ENCODE measurements at regions of chr1 and their contacts with region 1.

Region 1: GRCh38 chr1:5333291-5333690 is 658.9 kb downstream of the NPHP4 start:
- DNase-seq: no peak
- ATAC-seq: no peak
- H3K4me3 Mint-ChIP-seq: no peak overlapping the region
- H3K27ac Mint-ChIP-seq: no peak overlapping the region
- H3K4me1 Mint-ChIP-seq: peaks cover 38% of the 10 kb centered on the region
- H3K27me3 Mint-ChIP-seq: no peaks in the 10 kb centered on the region

Region 2: DNA sequence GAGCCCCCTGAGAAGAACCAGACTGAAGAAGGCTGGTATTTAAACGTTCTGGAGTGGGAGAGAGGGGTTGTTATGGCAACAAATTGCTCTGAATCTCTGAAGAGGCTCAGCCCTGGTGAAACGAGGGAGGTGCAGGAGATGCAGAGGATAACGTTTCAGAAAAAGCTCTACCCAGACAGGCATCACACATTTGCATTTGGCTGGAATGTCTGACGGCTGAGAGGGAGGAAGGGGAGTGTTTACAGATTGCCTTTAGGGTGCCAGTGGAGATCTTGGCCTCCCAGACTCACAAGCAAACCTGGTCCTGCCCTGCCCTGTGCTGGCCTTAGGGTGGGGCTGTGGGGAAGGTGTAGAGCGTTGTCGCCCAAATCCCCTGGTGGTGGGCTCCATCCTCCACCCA is 847.9 kb before region 1 on chr1:
- CTCF ChIA-PET with region 1: no interaction called
- POLR2A ChIA-PET with region 1: no interaction called
- intact Hi-C with region 1: no loop called
- DNase-seq: no peak
- ATAC-seq: no peak
- H3K4me3 Mint-ChIP-seq: no peak overlapping the region
- H3K27ac Mint-ChIP-seq: no peak overlapping the region
- H3K4me1 Mint-ChIP-seq: no peaks in the 10 kb centered on the region
- H3K27me3 Mint-ChIP-seq: peaks cover 1% of the 10 kb centered on the region

Region 3: DNA sequence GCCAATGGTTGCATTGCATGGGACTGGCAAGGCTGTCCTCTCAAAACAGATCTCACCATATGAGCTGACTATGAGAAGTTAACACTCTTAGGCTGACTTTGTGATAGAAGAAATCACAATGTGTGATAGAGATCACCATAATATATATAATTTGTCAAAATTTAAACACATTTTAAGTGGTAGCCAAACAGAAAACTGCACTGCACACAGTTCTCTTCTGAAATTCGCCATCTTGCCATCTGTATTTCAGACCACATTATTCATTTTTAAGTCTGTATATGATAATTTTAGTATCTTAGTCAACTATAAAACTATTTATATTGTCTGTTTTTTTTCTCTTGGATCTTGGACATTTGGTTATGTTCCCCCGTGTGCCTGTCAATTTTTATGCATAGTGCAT is 304.2 kb before region 1 on chr1:
- CTCF ChIA-PET with region 1: no interaction called
- POLR2A ChIA-PET with region 1: no interaction called
- intact Hi-C with region 1: no loop called
- DNase-seq: no peak
- ATAC-seq: no peak
- H3K4me3 Mint-ChIP-seq: no peak overlapping the region
- H3K27ac Mint-ChIP-seq: no peak overlapping the region
- H3K4me1 Mint-ChIP-seq: no peaks in the 10 kb centered on the region
- H3K27me3 Mint-ChIP-seq: peaks cover 2% of the 10 kb centered on the region

Region 4: GRCh38 chr1:5151511-5151910 is 181.8 kb before region 1 on chr1:
- CTCF ChIA-PET with region 1: no interaction called
- POLR2A ChIA-PET with region 1: no interaction called
- intact Hi-C with region 1: no loop called
- DNase-seq: no peak
- ATAC-seq: no peak
- H3K4me3 Mint-ChIP-seq: no peak overlapping the region
- H3K27ac Mint-ChIP-seq: no peak overlapping the region
- H3K4me1 Mint-ChIP-seq: no peaks in the 10 kb centered on the region
- H3K27me3 Mint-ChIP-seq: peaks cover 6% of the 10 kb centered on the region

Region 5: GRCh38 chr1:6101826-6102531 is 768.7 kb after region 1 on chr1:
- CTCF ChIA-PET with region 1: no interaction called
- POLR2A ChIA-PET with region 1: interaction called, 16 read pairs
- intact Hi-C with region 1: no loop called
- DNase-seq: peak; percentile 13
- ATAC-seq: peak; percentile 10
- H3K4me3 Mint-ChIP-seq: no peak overlapping the region
- H3K27ac Mint-ChIP-seq: no peak overlapping the region
- H3K4me1 Mint-ChIP-seq: no peaks in the 10 kb centered on the region
- H3K27me3 Mint-ChIP-seq: no peaks in the 10 kb centered on the region

Measured in activated CD4-positive, alpha-beta T cell treated with anti-CD3 and anti-CD28 coated beads for 36 hours (primary cell).